G401 (cell line): ENCODE measurements at regions of chr2 and their contacts with region 1.

Region 1: DNA sequence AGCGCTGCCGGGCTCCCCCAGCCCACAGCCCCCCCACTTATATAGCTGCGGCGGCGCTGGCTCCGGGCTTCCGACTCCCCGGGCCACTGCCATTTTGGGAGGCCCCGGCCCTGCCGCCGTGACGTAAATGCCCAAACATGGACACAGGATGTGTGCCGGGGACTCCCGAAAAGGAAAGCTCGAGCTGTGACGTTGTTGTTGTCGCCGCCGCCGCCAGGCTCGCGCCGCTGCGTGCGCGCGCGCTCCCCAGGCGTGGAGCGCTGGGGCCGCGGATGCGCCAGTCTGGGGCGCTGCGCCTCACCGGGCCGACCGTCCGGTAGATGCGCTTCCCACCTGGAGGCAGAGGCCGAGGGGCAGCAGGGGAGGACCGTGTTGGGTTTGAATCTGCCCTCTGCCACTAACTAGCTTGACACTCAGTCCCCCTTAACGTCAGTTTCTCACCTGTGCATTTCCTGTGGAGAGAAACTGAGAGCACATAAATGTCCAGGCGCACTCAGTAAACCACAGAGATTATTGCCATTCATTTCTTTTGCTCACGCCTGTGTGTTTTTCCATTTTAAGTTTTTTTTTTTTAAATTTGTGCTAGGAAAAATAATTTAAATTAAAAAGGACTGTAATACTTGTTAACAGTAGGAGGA is at the start of gene EGR4:
- DNase-seq: peak; percentile 95
- total RNA-seq, gene EGR4: not detected in 2 replicates

Region 2: GRCh38 chr2:73239776-73240175 is 53.9 kb before region 1 on chr2:
- in situ Hi-C with region 1: loop called (anchors 5 kb)
- DNase-seq: peak; percentile 78

Region 3: DNA sequence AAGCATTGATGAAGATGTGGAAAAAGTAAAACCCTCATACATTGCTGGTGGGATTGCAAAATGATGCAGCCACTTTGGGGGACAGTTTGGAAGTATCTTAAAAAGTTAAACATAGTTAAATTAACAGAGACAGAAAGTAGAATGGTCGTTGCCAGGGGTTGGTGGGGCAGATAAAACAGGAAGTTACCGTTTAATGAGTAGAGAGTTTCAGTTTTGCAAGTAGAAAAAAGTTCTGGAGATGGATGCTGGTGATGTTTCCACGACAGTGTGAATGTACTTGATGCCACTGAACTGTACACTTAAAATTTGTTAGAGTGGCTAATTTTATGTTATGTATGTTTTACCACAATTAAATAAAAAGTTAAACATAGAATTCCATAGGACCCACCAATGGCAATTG is 44.2 kb after region 1 on chr2:
- in situ Hi-C with region 1: no loop called
- DNase-seq: no peak